CD8-positive, alpha-beta memory T cell (primary cell): ENCODE measurements at regions of chr3 and their contacts with region 1.

Region 1: DNA sequence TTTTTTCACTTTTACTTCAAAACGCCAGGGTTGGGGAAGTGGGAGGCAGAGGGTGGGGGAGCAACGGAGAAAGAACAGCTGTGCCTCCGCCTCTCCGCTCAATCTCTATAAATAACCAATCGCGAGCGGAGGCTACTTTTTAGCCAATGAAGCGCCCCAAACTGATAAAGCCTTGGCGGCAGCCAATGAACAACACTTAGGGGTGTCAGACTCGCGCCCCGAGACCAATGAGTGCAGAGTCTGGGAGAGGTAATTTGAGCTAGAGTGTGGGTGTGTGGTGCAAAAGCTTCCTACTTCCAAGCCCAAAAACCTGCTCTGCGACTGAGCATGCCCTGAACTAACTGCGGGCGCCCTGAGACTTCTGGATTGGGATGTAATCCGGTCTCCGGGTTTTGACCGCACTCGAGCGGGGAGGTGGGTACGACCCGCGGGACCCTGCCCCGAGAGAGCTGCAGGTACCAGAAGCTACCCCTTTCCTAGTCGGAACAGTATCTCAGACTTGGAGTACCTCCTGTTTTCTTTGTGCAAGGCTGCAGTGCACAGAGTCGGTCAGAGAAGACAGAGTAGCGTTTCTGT is 800 bp upstream of the RAP2B start:
- DNase-seq: peak; percentile 81 to 95 (median 92)
- H3K4me3 ChIP-seq: peak overlapping the region; percentile 97
- H3K4me3 Mint-ChIP-seq: peak overlapping the region; percentile 95 to 100 (median 99)
- H3K27ac ChIP-seq: peak overlapping the region; percentile 83
- H3K27ac Mint-ChIP-seq: peak overlapping the region; percentile 94 to 99 (median 98)
- H3K4me1 ChIP-seq: peaks cover 25% of the 10 kb centered on the region
- H3K4me1 Mint-ChIP-seq: peaks cover 30 to 38% (median 37%) of the 10 kb centered on the region in 3 donors
- H3K27me3 ChIP-seq: no peaks in the 10 kb centered on the region
- H3K27me3 Mint-ChIP-seq: no peaks in the 10 kb centered on the region

Region 2: GRCh38 chr3:153043729-153044328 is 117.4 kb before region 1 on chr3:
- CTCF ChIA-PET with region 1: interaction called, 13 read pairs
- POLR2A ChIA-PET with region 1: no interaction called
- DNase-seq: no peak
- H3K4me3 ChIP-seq: no peak overlapping the region
- H3K4me3 Mint-ChIP-seq: no peak overlapping the region
- H3K27ac ChIP-seq: no peak overlapping the region
- H3K27ac Mint-ChIP-seq: no peak overlapping the region
- H3K4me1 ChIP-seq: no peaks in the 10 kb centered on the region
- H3K4me1 Mint-ChIP-seq: peaks cover 3 to 8% (median 4%) of the 10 kb centered on the region in 3 donors
- H3K27me3 ChIP-seq: no peaks in the 10 kb centered on the region
- H3K27me3 Mint-ChIP-seq: peaks cover 5 to 7% of the 10 kb centered on the region in 2 donors

Region 3: DNA sequence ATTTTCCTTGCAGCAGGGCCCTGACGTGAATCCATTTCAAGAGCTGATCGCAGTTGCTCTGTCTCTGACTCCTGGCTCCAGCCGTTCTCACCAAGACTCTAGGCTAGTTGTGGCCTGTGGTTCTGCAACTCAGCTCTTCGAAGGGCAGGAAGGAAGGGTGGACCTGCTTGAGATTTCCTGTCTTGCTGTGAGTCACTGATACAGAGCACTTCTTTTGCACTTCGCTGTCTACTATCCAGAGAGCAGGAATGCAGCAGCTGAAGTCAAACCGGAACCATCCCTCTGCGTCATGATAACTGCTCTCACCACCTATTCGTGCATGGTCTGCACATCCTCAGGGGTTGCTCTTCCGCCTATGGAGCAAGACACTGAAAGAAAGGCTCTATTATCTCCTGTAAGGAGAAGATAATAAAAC is 60.5 kb after region 1 on chr3:
- CTCF ChIA-PET with region 1: interaction called, 9 read pairs
- POLR2A ChIA-PET with region 1: interaction called, 40 read pairs
- DNase-seq: peak; percentile 59 to 90 (median 85)
- H3K4me3 ChIP-seq: peak overlapping the region; percentile 25
- H3K4me3 Mint-ChIP-seq: peak overlapping the region; percentile 5 to 83 (median 76)
- H3K27ac ChIP-seq: peak overlapping the region; percentile 55
- H3K27ac Mint-ChIP-seq: peak overlapping the region; percentile 84 to 100 (median 98)
- H3K4me1 ChIP-seq: peaks cover 61% of the 10 kb centered on the region
- H3K4me1 Mint-ChIP-seq: peaks cover 62 to 73% (median 71%) of the 10 kb centered on the region in 3 donors
- H3K27me3 ChIP-seq: no peaks in the 10 kb centered on the region
- H3K27me3 Mint-ChIP-seq: no peaks in the 10 kb centered on the region

Region 4: GRCh38 chr3:153291056-153291685 is 129.9 kb after region 1 on chr3:
- CTCF ChIA-PET with region 1: interaction called, 47 read pairs
- POLR2A ChIA-PET with region 1: interaction called, 9 read pairs
- DNase-seq: peak in 1 of 5 donors; percentile 11
- H3K4me3 ChIP-seq: no peak overlapping the region
- H3K4me3 Mint-ChIP-seq: peak overlapping the region in 2 of 7 donors; percentile 10 to 50
- H3K27ac ChIP-seq: no peak overlapping the region
- H3K27ac Mint-ChIP-seq: peak overlapping the region in 3 of 8 donors; percentile 3 to 72 (median 56)
- H3K4me1 ChIP-seq: peaks cover 34% of the 10 kb centered on the region
- H3K4me1 Mint-ChIP-seq: peaks cover 38 to 50% (median 50%) of the 10 kb centered on the region in 3 donors
- H3K27me3 ChIP-seq: no peaks in the 10 kb centered on the region
- H3K27me3 Mint-ChIP-seq: no peaks in the 10 kb centered on the region

Region 5: DNA sequence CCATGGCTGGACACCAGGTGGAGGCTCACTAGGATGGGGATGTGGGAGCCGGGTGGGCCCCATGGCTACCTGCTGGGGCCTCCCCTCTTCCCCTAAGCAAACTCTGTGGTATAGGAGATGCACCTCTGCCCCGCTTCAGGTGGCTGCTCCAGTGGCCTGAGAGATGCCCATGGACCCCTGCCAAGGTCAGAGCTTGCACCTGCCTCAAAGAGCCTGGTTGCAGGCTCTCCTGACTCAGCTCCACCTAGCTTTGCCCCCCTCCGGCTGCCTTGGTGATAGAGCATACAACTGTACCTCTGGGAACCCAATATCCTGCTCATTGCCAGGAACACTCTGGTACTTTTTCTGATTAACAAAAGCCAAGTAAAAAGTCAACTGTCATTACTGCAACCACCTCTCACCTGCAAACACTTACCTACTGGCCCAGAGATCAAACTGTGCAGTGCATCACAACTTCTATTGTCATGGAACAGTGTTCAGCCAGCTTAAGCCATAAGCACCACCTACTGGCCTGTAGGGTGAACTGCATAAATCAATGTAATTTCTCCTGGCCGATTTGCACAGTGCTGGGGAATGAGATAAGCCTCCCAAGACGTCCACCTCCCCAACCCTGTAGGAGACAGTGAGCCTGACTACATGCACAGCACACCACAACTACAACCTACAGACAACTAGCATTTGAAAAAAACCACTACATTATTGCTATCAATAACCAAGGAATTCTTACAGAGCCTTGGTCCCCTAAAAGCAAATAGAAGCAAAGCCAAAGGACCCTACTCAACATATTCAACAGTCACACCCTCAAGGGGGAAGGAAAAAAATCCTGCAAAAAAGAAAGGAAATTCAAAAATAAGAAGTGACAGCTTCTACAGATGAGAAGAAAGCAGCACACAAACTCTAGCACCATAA is 607.6 kb after region 1 on chr3:
- CTCF ChIA-PET with region 1: interaction called, 14 read pairs
- POLR2A ChIA-PET with region 1: no interaction called
- DNase-seq: peak; percentile 25 to 57 (median 45)
- H3K4me3 ChIP-seq: no peak overlapping the region
- H3K4me3 Mint-ChIP-seq: no peak overlapping the region
- H3K27ac ChIP-seq: no peak overlapping the region
- H3K27ac Mint-ChIP-seq: peak overlapping the region in 1 of 8 donors; percentile 51
- H3K4me1 ChIP-seq: no peaks in the 10 kb centered on the region
- H3K4me1 Mint-ChIP-seq: peaks cover 0 to 5% (median 2%) of the 10 kb centered on the region in 3 donors
- H3K27me3 ChIP-seq: no peaks in the 10 kb centered on the region
- H3K27me3 Mint-ChIP-seq: peaks cover 5 to 30% of the 10 kb centered on the region in 2 donors